WTC11 (cell line): ENCODE measurements at regions of chrX and their contacts with region 1.

Region 1: DNA sequence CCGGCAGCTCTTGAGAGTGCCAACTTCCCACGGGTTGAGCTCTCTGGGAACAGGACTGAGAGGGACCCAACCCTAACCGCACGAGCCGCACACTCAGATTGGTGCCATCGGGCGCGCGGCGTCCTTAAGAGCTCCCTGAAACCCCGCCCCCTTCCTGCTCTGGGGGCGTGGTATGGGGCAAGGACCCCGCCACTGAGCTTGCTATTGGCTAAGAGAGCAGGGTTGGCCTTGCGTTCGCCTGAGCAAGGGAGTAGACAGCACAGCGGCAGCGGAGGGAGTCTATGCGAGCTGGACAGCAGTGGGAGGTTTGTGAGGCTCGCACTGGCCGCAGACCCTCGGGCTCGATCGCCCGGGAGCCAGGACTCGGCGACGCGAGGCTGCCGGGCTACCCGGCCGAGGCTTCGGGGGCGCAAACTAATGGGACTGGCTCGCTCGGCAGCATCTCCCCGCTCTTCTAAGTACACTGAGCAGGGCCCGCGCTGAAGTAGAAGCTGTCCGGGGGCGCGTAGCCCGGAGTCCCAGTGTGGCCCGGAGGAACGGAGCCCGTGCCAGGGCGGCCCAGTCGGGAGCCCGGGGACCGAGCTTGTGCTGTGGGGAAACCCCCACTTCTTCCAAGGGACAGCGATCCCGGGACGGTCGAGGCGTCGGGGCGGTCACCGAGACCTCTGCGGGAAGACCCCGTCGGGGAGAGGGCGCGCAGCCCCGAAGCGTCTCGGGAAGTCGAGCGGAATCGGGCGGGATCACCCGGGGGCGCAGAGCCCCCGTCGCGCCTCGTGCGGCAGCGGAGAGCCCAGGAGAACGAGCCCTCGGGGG is at the start of gene EFNB1:
- DNase-seq: peak; percentile 87
- ATAC-seq: peak; percentile 85
- H3K4me3 Mint-ChIP-seq: peak within 1 kb of the TSS; percentile 72
- H3K27ac Mint-ChIP-seq: no peak within 1 kb of the TSS
- H3K4me1 Mint-ChIP-seq: peaks cover 19% of the 10 kb centered on the region
- H3K27me3 Mint-ChIP-seq: peaks cover 99% of the 10 kb centered on the region
- CTCF ChIP-seq: no peak
- total RNA-seq, gene EFNB1: 9.7 to 16.4 TPM (median 10.0 TPM) in 3 replicates

Region 2: DNA sequence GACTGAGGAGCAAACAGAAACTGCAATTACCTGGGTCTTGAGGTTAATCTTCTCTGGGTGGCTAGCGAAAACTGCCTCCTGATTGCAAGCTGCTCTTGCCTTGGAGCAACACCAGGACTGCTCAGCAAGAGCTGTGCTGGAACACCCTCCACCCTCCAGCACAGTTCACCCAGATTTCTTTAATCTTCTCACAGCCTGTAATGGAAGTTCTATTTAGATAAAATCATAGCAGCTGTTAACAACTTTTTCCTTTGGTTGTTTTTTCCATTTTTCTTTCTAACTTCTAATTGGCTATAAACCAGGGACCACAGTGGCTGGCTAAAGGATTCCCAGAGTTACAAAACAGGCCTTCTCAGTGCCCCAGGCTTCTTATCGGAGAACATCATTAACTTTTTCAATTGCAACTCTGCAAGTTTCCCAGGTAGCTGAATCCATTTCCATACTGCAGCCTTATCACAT is 432.0 kb before region 1 on chrX:
- CTCF ChIA-PET with region 1: no interaction called
- POLR2A ChIA-PET with region 1: no interaction called
- DNase-seq: no peak
- ATAC-seq: no peak
- H3K4me3 Mint-ChIP-seq: no peak overlapping the region
- H3K27ac Mint-ChIP-seq: no peak overlapping the region
- H3K4me1 Mint-ChIP-seq: peaks cover 7% of the 10 kb centered on the region
- H3K27me3 Mint-ChIP-seq: no peaks in the 10 kb centered on the region
- CTCF ChIP-seq: no peak

Region 3: DNA sequence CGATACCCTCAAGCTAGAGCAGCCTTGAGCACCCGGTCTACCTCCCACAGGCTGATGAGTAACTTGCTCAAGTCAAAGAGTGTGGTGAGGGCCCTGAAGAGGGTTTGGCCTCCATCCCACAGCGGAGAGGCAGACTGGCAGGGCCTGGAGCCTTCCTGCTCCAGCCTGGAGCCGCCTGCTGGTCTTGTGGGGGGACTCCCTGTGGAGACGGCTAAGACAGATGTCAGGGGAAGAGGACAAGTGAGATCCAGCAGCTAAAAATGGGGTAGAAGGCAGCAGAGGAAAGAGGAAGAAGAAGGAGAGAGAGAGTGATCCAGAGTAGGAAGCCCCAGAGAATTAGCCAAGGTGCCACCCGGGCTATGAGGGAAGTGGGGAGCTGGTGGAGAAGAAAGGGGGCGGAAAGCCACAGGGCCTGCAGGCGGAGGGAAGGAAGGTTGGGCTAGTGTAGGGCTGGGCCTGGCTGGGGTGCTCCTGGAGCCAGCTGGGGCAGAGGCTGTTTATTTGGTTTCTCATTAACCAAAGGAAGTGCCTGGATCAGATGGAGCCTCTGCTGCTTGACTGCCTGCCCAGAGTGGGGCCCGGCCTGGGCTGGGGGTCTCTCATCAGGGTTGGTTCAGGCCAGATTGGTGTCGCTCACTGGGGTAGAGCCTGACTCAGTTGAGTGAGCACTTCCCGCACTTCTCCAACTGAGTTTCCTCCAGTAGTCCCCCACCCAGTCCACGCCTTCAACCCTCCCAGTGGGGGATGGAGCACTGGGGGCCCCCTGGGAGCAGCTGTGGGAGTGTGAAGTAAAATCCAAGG is 14.0 kb after region 1 on chrX:
- CTCF ChIA-PET with region 1: interaction called, 19 read pairs
- POLR2A ChIA-PET with region 1: interaction called, 7 read pairs
- DNase-seq: no peak
- ATAC-seq: no peak
- H3K4me3 Mint-ChIP-seq: no peak overlapping the region
- H3K27ac Mint-ChIP-seq: no peak overlapping the region
- H3K4me1 Mint-ChIP-seq: peaks cover 37% of the 10 kb centered on the region
- H3K27me3 Mint-ChIP-seq: peaks cover 10% of the 10 kb centered on the region
- CTCF ChIP-seq: no peak

Region 4: DNA sequence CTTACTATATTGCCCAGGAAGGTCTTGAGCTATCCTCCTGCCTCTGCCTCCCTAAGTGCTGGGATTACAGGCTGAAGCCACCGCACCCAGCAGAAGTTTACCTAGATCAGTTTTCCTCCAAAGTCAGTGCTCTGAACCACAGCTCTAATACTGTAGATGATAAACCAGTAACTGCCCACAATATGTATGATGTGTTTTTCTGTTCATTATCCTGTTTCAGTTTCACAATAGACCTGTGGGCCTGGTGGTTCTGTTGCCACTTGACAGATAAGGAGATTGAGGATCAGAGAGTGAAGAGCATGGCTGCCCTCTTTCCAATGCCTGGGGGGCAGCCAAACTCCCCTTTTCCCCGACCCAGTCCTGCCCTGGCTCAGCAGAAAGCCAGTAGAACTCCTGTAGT is 86.8 kb after region 1 on chrX:
- CTCF ChIA-PET with region 1: interaction called, 26 read pairs
- POLR2A ChIA-PET with region 1: no interaction called
- DNase-seq: no peak
- ATAC-seq: no peak
- H3K4me3 Mint-ChIP-seq: no peak overlapping the region
- H3K27ac Mint-ChIP-seq: no peak overlapping the region
- H3K4me1 Mint-ChIP-seq: peaks cover 29% of the 10 kb centered on the region
- H3K27me3 Mint-ChIP-seq: peaks cover 10% of the 10 kb centered on the region
- CTCF ChIP-seq: no peak

Region 5: GRCh38 chrX:68978258-68979054 is 149.5 kb after region 1 on chrX:
- CTCF ChIA-PET with region 1: interaction called, 12 read pairs
- POLR2A ChIA-PET with region 1: no interaction called
- DNase-seq: peak; percentile 19
- ATAC-seq: peak; percentile 94
- H3K4me3 Mint-ChIP-seq: no peak overlapping the region
- H3K27ac Mint-ChIP-seq: no peak overlapping the region
- H3K4me1 Mint-ChIP-seq: peaks cover 5% of the 10 kb centered on the region
- H3K27me3 Mint-ChIP-seq: peaks cover 3% of the 10 kb centered on the region
- CTCF ChIP-seq: no peak

Region 6: GRCh38 chrX:69060631-69061408 is 231.9 kb after region 1 on chrX:
- CTCF ChIA-PET with region 1: interaction called, 40 read pairs
- POLR2A ChIA-PET with region 1: no interaction called
- DNase-seq: peak; percentile 37
- ATAC-seq: peak; percentile 79
- H3K4me3 Mint-ChIP-seq: no peak overlapping the region
- H3K27ac Mint-ChIP-seq: no peak overlapping the region
- H3K4me1 Mint-ChIP-seq: peaks cover 6% of the 10 kb centered on the region; the same call in 1 of the 2 replicates
- H3K27me3 Mint-ChIP-seq: peaks cover 2% of the 10 kb centered on the region
- CTCF ChIP-seq: no peak

Region 7: DNA sequence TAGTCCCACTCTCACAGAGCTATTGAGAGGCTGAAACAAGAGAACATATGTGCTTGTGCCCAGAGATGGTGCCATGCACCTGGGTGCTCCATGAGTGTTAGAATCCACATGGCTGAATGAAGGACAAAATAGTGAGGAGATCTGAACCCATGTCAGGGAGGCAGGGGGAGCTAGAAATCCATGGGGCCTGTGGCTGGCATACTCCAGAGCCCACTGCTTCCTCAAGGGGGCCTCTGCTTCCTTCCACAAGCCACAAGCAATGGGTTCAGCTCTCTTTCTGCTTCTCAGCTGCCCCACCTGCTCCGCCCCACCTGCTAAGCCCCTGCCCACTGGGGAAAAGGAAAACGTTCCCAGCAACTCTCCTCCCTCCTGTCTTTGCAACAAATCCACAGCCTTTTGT is 290.2 kb after region 1 on chrX:
- CTCF ChIA-PET with region 1: interaction called, 14 read pairs
- POLR2A ChIA-PET with region 1: no interaction called
- DNase-seq: peak; percentile 23
- ATAC-seq: peak; percentile 82
- H3K4me3 Mint-ChIP-seq: no peak overlapping the region
- H3K27ac Mint-ChIP-seq: no peak overlapping the region
- H3K4me1 Mint-ChIP-seq: peaks cover 6% of the 10 kb centered on the region; the same call in 1 of the 2 replicates
- H3K27me3 Mint-ChIP-seq: peaks cover 3% of the 10 kb centered on the region; the same call in 1 of the 2 replicates
- CTCF ChIP-seq: no peak

Region 8: GRCh38 chrX:69236641-69237040 is 407.7 kb after region 1 on chrX:
- CTCF ChIA-PET with region 1: no interaction called
- POLR2A ChIA-PET with region 1: no interaction called
- DNase-seq: no peak
- ATAC-seq: no peak
- H3K4me3 Mint-ChIP-seq: no peak overlapping the region
- H3K27ac Mint-ChIP-seq: no peak overlapping the region
- H3K4me1 Mint-ChIP-seq: no peaks in the 10 kb centered on the region
- H3K27me3 Mint-ChIP-seq: peaks cover 19% of the 10 kb centered on the region
- CTCF ChIP-seq: no peak

Region 9: GRCh38 chrX:69285881-69286564 is 457.1 kb after region 1 on chrX:
- CTCF ChIA-PET with region 1: interaction called, 43 read pairs
- POLR2A ChIA-PET with region 1: interaction called, 3 read pairs
- DNase-seq: peak; percentile 66
- ATAC-seq: peak; percentile 58
- H3K4me3 Mint-ChIP-seq: peak overlapping the region; percentile 61
- H3K27ac Mint-ChIP-seq: no peak overlapping the region
- H3K4me1 Mint-ChIP-seq: peaks cover 19% of the 10 kb centered on the region
- H3K27me3 Mint-ChIP-seq: peaks cover 65% of the 10 kb centered on the region
- CTCF ChIP-seq: peak; percentile 61